Activated naive CD4-positive, alpha-beta T cell treated with anti-CD3 and anti-CD28 coated beads, Interleukin-2, amount 10 ng/mL, durations not matched to agents 7 days and 5 days (primary cell): ENCODE measurements at regions of chr2 and their contacts with region 1.

Region 1: DNA sequence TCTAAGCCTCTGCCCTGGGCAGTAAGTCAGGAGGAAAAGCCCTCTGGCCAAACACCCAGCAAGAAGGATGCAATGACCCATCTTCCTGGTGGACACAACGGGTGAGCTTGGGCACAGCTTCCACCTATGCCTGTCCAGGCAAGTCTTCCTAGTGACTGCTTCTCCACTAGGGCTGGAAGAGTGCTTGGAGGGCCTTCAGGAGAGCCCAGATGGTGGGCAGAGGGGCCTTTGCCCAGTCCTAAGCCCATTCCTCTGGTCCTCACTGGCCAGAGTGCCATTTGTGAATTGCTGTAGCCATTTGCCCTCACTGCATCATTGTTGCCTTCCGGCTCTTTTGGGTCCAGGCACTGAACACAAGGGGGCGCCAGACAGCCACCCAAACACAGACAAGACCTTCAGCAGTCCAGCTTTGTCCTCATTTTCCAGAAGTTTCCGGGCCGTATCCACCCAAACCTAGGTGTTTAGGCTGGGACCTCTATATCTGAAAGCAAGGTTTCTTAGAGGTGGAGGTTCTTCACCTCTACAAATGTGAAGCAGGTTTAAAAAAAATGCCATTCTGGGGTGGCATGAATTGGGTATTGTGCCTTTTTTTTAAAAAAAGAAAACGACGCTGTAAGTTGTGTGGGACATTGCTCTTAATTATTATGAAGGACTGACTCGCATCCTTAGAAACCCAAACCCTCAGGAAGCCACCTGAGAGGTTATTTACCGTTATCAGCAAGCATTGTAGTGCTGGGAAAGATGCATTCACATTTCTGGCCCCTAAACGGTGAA is 29.5 kb downstream of the PAX8 start:
- DNase-seq: peak; percentile 85
- H3K4me3 Mint-ChIP-seq: no peak overlapping the region
- H3K27ac Mint-ChIP-seq: peak overlapping the region; percentile 93
- H3K4me1 Mint-ChIP-seq: peaks cover 57% of the 10 kb centered on the region
- H3K27me3 Mint-ChIP-seq: no peaks in the 10 kb centered on the region

Region 2: GRCh38 chr2:113050921-113051895 is 198.0 kb before region 1 on chr2:
- CTCF ChIA-PET with region 1: no interaction called
- DNase-seq: no peak
- H3K4me3 Mint-ChIP-seq: no peak overlapping the region
- H3K27ac Mint-ChIP-seq: no peak overlapping the region
- H3K4me1 Mint-ChIP-seq: no peaks in the 10 kb centered on the region
- H3K27me3 Mint-ChIP-seq: peaks cover 7% of the 10 kb centered on the region

Region 3: DNA sequence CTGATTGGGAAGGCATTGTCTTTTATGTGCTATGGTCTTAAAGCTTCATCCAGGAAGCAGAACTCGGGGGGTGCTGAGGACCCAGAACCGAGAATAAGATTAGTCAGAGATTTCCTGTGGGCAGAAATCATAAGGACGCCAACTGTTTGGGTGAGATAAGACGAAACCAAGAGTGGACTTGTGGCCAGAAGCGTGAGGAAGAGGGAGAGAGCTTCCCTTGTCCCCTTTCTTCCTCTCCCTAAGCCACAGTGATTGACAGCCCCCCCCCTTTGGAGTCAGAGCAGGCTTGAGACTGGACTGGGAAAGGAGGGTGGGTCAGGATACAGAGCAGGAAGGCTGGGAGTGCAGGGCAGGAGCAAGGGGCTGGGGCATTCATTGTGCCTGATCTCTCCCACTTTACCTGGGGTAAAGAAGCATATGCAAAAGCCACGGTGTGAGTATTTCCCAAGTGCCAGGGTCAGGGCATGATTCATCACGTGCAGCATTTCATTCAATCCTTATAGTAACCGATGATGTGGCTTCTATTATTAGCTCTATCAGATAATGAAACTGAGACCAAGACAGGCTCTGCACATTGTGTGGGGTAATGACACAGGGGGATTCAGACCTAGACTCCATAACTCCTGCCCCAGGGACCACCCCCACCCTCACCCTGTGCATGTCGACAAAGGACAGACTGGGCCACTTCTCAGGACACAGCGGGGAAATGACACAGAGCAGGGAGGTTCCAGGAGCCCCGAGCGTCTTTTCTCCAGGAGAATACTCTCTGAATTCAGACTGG is 124.8 kb before region 1 on chr2:
- CTCF ChIA-PET with region 1: no interaction called
- DNase-seq: no peak
- H3K4me3 Mint-ChIP-seq: no peak overlapping the region
- H3K27ac Mint-ChIP-seq: no peak overlapping the region
- H3K4me1 Mint-ChIP-seq: peaks cover 14% of the 10 kb centered on the region
- H3K27me3 Mint-ChIP-seq: peaks cover 43% of the 10 kb centered on the region

Region 4: GRCh38 chr2:113233593-113234550 is 15.3 kb before region 1 on chr2:
- CTCF ChIA-PET with region 1: interaction called, 14 read pairs
- DNase-seq: no peak
- H3K4me3 Mint-ChIP-seq: peak overlapping the region; percentile 35
- H3K27ac Mint-ChIP-seq: no peak overlapping the region
- H3K4me1 Mint-ChIP-seq: peaks cover 50% of the 10 kb centered on the region
- H3K27me3 Mint-ChIP-seq: peaks cover 14% of the 10 kb centered on the region

Region 5: GRCh38 chr2:113298176-113298575 is 49.0 kb after region 1 on chr2:
- CTCF ChIA-PET with region 1: interaction called, 11 read pairs
- DNase-seq: no peak
- H3K4me3 Mint-ChIP-seq: no peak overlapping the region
- H3K27ac Mint-ChIP-seq: no peak overlapping the region
- H3K4me1 Mint-ChIP-seq: no peaks in the 10 kb centered on the region
- H3K27me3 Mint-ChIP-seq: peaks cover 44% of the 10 kb centered on the region

Region 6: DNA sequence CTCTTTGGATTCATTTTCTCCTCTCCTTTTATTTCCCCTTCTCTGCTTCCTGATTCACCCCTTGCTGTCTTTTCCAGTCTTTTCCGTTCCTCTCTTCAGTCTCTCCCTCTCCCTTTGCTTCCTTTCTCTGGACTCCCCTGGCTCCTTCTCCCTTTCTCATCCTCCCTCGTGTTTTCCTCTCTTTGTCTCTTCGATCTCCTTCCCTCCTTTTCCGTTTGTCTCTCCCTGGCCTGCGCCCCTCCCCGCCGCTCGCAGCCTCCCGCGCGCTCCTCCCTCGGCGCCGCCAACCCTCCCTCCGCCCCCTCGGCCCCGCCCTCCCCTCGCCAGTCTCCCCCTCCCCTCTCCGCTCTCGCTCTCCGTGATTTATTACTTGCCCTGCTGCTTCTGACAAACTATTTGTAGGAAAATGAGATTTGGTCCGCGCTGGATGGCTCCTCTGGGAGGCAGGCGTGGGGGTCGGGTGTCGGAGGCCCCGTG is 75.5 kb after region 1 on chr2:
- CTCF ChIA-PET with region 1: no interaction called
- DNase-seq: peak; percentile 58
- H3K4me3 Mint-ChIP-seq: peak overlapping the region; percentile 60
- H3K27ac Mint-ChIP-seq: no peak overlapping the region
- H3K4me1 Mint-ChIP-seq: peaks cover 13% of the 10 kb centered on the region
- H3K27me3 Mint-ChIP-seq: peaks cover 59% of the 10 kb centered on the region

Region 7: GRCh38 chr2:113370478-113371091 is 121.4 kb after region 1 on chr2:
- CTCF ChIA-PET with region 1: interaction called, 37 read pairs
- DNase-seq: peak; percentile 82
- H3K4me3 Mint-ChIP-seq: no peak overlapping the region
- H3K27ac Mint-ChIP-seq: no peak overlapping the region
- H3K4me1 Mint-ChIP-seq: peaks cover 7% of the 10 kb centered on the region
- H3K27me3 Mint-ChIP-seq: peaks cover 15% of the 10 kb centered on the region

Region 8: DNA sequence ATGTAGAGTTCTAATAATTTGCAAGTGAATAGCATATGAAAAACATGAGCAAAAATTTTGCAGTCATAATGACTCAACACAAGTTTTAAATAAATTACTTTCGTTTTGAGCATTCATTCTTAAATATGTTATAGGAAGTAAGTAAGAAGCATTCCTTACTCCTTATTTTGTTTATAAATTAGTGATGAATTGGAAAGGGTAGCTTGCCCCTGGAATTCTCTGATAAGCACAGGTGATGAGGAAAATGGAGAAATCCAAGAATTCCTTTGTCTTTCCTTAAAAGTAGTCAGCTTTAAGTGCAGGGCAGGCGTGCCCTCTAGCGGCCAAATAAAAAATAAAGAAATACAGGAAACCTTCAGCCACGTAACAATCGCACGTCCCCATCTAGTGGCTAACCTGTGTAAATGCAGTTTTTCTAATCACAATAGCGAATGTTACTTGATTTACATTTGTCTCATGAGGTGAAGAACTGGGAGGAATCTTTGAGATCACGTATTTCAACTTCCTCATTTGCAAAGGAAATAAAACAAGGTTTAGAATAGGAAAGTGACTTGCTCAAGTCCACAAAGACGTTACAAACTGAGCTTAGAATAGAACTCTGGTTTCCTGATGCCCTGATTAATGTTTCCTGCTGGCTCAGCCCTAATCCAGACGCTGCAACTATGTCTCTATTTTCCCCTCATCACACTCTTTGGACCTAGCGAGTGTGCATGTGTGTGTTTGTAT is 141.1 kb after region 1 on chr2:
- CTCF ChIA-PET with region 1: interaction called, 25 read pairs
- DNase-seq: peak; percentile 63
- H3K4me3 Mint-ChIP-seq: peak overlapping the region; percentile 53
- H3K27ac Mint-ChIP-seq: peak overlapping the region; percentile 78
- H3K4me1 Mint-ChIP-seq: peaks cover 15% of the 10 kb centered on the region
- H3K27me3 Mint-ChIP-seq: peaks cover 23% of the 10 kb centered on the region